HAP-1 (cell line): ENCODE measurements at regions of chr13 and their contacts with region 1.

Region 1: GRCh38 chr13:30465585-30466357 is at the start of gene HMGB1:
- DNase-seq: peak; percentile 98 to 99
- H3K4me3 ChIP-seq: peak within 1 kb of the TSS; percentile 65
- H3K4me1 ChIP-seq: peaks cover 22% of the 10 kb centered on the region
- H3K27me3 ChIP-seq: no peaks in the 10 kb centered on the region

Region 2: GRCh38 chr13:30257468-30258099 is 208.2 kb before region 1 on chr13:
- in situ Hi-C with region 1: no loop called
- DNase-seq: no peak
- H3K4me3 ChIP-seq: no peak overlapping the region
- H3K4me1 ChIP-seq: peaks cover 11% of the 10 kb centered on the region
- H3K27me3 ChIP-seq: no peaks in the 10 kb centered on the region

Region 3: DNA sequence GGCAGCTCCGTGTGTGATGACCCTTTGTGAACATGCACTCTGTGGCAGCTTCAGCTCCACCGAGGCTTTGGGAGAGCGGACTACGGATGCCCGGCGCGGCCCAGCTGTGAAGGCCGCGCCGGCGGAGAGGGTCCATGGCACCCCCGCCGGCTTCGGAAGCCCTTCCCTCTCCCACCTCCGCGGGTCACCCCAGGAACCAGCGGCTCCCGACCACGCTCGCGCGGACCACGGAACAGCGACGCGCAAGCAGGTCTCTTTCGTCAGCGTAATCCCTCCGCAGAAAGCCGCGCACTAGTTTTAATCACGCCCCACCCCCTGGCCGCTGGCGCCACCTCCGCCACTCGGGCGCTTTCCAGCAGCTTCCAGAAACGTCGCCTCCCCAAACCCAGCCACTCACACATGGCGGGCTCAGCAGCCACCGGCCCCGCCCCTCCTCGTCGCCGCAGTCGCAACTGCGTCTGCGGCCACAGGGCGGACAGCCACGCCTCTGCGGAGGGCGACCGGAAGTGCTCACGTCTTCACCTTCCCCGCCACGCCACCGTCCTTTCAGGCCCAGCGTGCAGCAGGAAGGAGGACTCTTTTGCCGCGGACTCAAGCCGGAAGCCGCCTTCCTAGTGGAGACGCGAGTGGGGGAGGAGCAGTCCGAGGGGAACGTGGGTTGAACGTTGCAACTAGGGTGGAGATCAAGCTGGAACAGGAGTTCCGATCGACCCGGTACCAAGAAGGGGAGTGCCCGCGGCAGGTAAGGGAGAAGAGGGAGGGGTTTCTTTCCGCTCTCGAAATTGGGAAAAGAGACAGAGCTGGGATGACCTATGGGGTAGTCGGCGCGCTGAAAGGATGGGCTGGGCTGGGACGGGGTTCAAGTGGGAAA is 151.8 kb after region 1 on chr13 and contains the start of gene USPL1:
- in situ Hi-C with region 1: loop called (anchors 5 kb)
- DNase-seq: peak; percentile 97 to 98
- H3K4me3 ChIP-seq: peak within 1 kb of the TSS; percentile 89
- H3K4me1 ChIP-seq: peaks cover 13% of the 10 kb centered on the region
- H3K27me3 ChIP-seq: no peaks in the 10 kb centered on the region

Region 4: DNA sequence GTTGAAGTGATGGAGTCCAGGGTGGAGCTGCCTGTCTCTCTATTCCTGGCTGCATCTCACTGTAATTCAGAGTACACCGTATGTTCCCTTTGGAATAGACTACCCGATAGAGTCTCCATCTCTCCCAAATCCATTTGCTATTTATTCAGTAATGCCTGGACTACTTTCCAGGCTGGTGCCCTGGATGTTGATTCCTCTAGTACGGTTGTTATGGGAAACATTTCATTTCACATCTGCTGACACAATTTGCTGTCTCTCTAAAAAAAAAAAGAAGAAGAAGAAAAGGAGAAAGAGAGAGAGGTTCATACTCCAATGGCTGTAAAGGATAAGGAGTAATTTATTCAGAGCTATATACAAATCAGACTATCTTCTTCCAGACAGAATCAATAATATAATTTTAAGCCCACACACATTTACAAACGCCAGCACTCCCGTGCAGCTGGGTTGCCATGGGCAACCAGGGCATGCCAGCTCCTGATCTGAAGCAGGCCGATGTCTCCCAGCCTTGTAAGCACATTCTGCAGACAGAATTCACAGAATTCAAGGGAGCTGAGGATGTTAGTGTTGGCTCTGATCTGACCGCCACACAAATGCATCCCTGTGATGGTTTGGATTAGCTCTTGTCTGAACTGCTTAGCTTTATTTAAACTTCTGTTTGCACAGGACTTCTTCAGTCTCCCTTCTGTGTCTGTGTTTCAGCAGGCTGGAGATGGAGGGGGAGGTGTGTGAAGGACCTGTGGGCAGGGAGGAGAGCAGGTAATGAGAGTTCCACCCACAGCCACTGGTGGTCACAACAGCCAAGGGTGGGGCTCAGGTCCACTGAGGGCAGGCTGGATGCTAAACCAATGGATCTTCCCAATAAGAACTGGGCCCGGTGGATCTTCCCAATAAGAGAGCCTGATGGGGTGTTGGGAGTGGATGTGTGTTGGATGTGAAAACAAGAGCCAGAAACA is 532.6 kb after region 1 on chr13:
- in situ Hi-C with region 1: no loop called
- DNase-seq: no peak
- H3K4me3 ChIP-seq: no peak overlapping the region
- H3K4me1 ChIP-seq: no peaks in the 10 kb centered on the region
- H3K27me3 ChIP-seq: no peaks in the 10 kb centered on the region